ENCODE measurements at regions of chr19 and their contacts with region 1.

Region 1: GRCh38 chr19:38929929-38930775 is at the start of gene SARS2:
- DNase-seq: peak; percentile 95
- ATAC-seq: peak; percentile 69
- H3K4me3 Mint-ChIP-seq: peak within 1 kb of the TSS; percentile 81
- H3K27ac Mint-ChIP-seq: peak within 1 kb of the TSS; percentile 92
- H3K4me1 Mint-ChIP-seq: peaks cover 28% of the 10 kb centered on the region
- H3K27me3 Mint-ChIP-seq: no peaks in the 10 kb centered on the region
- total RNA-seq, gene SARS2: 36.7 to 39.4 TPM

Region 2: DNA sequence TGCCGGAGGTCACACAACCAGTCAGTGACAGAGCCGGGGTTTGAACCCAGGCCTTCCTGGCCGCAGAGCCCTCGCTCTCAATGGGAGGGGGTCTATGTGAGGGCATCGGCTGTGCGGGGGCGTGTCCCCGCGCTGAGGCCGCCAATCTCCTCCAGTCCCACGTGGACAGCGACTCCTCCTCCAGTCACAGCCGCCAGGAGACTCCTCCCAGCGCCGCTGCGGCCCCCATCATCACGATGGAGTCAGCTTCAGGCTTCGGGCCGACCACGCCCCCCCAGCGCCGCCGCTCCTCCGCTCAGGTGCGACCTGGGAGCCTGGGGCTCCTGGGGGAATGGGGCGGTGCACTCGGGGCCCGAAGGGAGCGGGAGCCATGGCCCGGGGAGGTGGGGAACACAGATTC is 535.7 kb before region 1 on chr19:
- CTCF ChIA-PET with region 1: interaction called, 3 read pairs
- POLR2A ChIA-PET with region 1: no interaction called
- intact Hi-C with region 1: loop called in 1 of 2 experiments (anchors 2 kb)
- DNase-seq: peak; percentile 91
- ATAC-seq: peak; percentile 80
- H3K4me3 Mint-ChIP-seq: peak overlapping the region; percentile 76
- H3K27ac Mint-ChIP-seq: peak overlapping the region; percentile 66
- H3K4me1 Mint-ChIP-seq: peaks cover 29% of the 10 kb centered on the region
- H3K27me3 Mint-ChIP-seq: peaks cover 15% of the 10 kb centered on the region

Region 3: GRCh38 chr19:38618590-38619360 is 311.4 kb before region 1 on chr19 and contains the start of gene EIF3K:
- CTCF ChIA-PET with region 1: interaction called, 3 read pairs
- POLR2A ChIA-PET with region 1: interaction called, 3 read pairs
- intact Hi-C with region 1: loop called in 1 of 2 experiments (anchors 1 kb)
- DNase-seq: peak; percentile 99
- ATAC-seq: peak; percentile 74
- H3K4me3 Mint-ChIP-seq: peak within 1 kb of the TSS; percentile 100
- H3K27ac Mint-ChIP-seq: peak within 1 kb of the TSS; percentile 99
- H3K4me1 Mint-ChIP-seq: peaks cover 44% of the 10 kb centered on the region
- H3K27me3 Mint-ChIP-seq: no peaks in the 10 kb centered on the region
- total RNA-seq, gene EIF3K: 269 to 297 TPM

Region 4: DNA sequence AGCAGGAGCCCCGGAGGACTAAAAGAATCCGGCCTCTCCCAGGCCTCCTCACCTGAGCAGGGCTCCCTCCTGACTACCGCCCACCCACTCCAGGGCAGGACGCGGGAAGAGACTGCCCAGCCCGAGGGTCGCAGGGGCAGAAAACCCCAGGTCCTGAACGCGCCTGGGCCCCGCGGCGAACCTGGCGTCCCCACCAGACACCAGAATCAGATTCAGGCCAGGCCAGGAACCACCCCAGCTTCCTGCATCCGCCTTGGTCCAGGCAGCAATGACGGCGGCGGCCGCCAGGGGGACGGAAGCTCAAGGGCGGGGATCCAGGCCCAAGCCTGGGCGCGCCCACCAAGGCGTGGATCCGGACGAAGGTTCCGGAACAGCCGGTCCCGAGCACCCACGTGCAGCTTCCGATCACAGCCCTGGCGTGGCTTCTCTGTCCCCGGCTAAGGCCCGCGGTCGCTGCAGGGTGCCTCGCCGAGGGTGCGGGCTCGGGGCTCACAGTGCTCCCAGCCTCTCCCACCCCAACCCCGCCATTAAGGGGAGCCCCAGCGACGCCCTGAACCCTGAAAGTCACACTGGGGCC is 160.4 kb before region 1 on chr19:
- CTCF ChIA-PET with region 1: interaction called, 10 read pairs
- POLR2A ChIA-PET with region 1: no interaction called
- intact Hi-C with region 1: no loop called
- DNase-seq: peak; percentile 94
- ATAC-seq: peak; percentile 85
- H3K4me3 Mint-ChIP-seq: peak overlapping the region; percentile 32
- H3K27ac Mint-ChIP-seq: peak overlapping the region; percentile 73
- H3K4me1 Mint-ChIP-seq: peaks cover 6% of the 10 kb centered on the region
- H3K27me3 Mint-ChIP-seq: no peaks in the 10 kb centered on the region

Region 5: DNA sequence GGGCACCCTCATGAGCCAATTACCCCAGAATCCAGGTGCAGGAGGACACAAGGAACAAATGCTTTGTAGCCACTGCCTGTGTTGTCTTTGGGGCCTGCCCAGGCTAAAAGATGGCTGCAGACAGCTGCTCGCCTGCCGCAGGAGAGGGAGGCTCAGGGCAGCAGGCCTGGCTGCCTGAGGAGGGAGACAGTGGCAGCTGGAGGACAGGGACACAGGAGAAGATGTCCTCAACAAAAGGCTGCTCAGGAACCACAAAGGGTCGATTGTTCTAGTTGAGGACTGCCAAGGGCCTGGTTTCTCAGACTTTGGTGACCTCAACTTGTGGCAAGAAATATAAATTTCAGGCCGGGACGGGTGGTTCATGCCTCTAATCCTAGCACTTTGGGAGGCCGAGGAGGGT is 38.4 kb before region 1 on chr19:
- CTCF ChIA-PET with region 1: interaction called, 17 read pairs
- POLR2A ChIA-PET with region 1: no interaction called
- intact Hi-C with region 1: no loop called
- DNase-seq: no peak
- ATAC-seq: no peak
- H3K4me3 Mint-ChIP-seq: no peak overlapping the region
- H3K27ac Mint-ChIP-seq: no peak overlapping the region
- H3K4me1 Mint-ChIP-seq: no peaks in the 10 kb centered on the region
- H3K27me3 Mint-ChIP-seq: no peaks in the 10 kb centered on the region

Region 6: GRCh38 chr19:39125554-39126311 is 195.6 kb after region 1 on chr19 and contains the start of gene PAK4:
- CTCF ChIA-PET with region 1: no interaction called
- POLR2A ChIA-PET with region 1: no interaction called
- intact Hi-C with region 1: loop called in 1 of 2 experiments (anchors 1 kb)
- DNase-seq: peak; percentile 99
- ATAC-seq: peak; percentile 94
- H3K4me3 Mint-ChIP-seq: peak within 1 kb of the TSS; percentile 82
- H3K27ac Mint-ChIP-seq: peak within 1 kb of the TSS; percentile 90
- H3K4me1 Mint-ChIP-seq: peaks cover 25% of the 10 kb centered on the region
- H3K27me3 Mint-ChIP-seq: no peaks in the 10 kb centered on the region
- total RNA-seq, gene PAK4: 14.2 to 22.6 TPM

Measured in activated CD4-positive, alpha-beta T cell treated with anti-CD3 and anti-CD28 coated beads for 36 hours (primary cell).